Lower lobe of right lung (tissue), 2 donors: ENCODE measurements at regions of chr20 and their contacts with region 1.

Region 1: GRCh38 chr20:20083807-20084206 is 31.5 kb downstream of the CFAP61 start:
- DNase-seq: no peak
- ATAC-seq: peak; percentile 64 to 66
- H3K4me3 ChIP-seq: no peak overlapping the region
- H3K27ac ChIP-seq: no peak overlapping the region
- H3K4me1 ChIP-seq: peaks cover 5% of the 10 kb centered on the region
- H3K27me3 ChIP-seq: peaks cover 10% of the 10 kb centered on the region
- CTCF ChIP-seq: peak; percentile 49

Region 2: GRCh38 chr20:19934792-19935491 is 148.9 kb before region 1 on chr20:
- intact Hi-C with region 1: no loop called
- DNase-seq: peak; percentile 71
- ATAC-seq: peak; percentile 78 to 85
- H3K4me3 ChIP-seq: peak overlapping the region; percentile 42
- H3K27ac ChIP-seq: peak overlapping the region; percentile 88
- H3K4me1 ChIP-seq: peaks cover 95% of the 10 kb centered on the region
- H3K27me3 ChIP-seq: no peaks in the 10 kb centered on the region
- CTCF ChIP-seq: no peak

Region 3: GRCh38 chr20:20229595-20229994 is 145.8 kb after region 1 on chr20:
- intact Hi-C with region 1: loop called (anchors 10 kb)
- DNase-seq: no peak
- ATAC-seq: no peak
- H3K4me3 ChIP-seq: no peak overlapping the region
- H3K27ac ChIP-seq: no peak overlapping the region
- H3K4me1 ChIP-seq: no peaks in the 10 kb centered on the region
- H3K27me3 ChIP-seq: peaks cover 3% of the 10 kb centered on the region
- CTCF ChIP-seq: no peak